CD8-positive, alpha-beta T cell (primary cell): ENCODE measurements at regions of chr9 and their contacts with region 1.

Region 1: GRCh38 chr9:12091865-12092527 is 601.2 kb upstream of the TYRP1 start:
- DNase-seq: no peak
- ATAC-seq: no peak
- H3K4me3 ChIP-seq: no peak overlapping the region
- H3K4me3 Mint-ChIP-seq: no peak overlapping the region
- H3K27ac ChIP-seq: no peak overlapping the region
- H3K27ac Mint-ChIP-seq: no peak overlapping the region
- H3K4me1 ChIP-seq: no peaks in the 10 kb centered on the region
- H3K4me1 Mint-ChIP-seq: no peaks in the 10 kb centered on the region
- H3K27me3 ChIP-seq: no peaks in the 10 kb centered on the region
- H3K27me3 Mint-ChIP-seq: no peaks in the 10 kb centered on the region
- CTCF ChIP-seq: no peak

Region 2: DNA sequence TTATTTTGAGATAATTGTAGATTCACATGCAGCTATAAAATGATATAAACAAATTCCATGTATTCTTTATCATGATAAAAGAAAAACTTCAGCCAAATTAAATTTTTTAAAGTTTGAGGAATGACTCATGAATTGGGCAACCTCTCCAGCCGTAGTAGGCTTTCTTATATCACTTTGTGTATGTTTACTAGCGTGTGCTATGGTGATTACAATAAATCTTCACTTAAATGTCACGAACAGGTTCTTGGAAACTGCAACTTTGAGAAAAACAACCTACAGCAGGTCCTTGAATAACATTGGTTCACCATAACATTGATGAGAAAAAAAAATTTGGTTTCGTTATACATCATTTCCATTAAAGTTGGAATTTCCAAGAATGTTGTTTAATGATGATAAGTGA is 129.7 kb before region 1 on chr9:
- CTCF ChIA-PET with region 1: no interaction called
- POLR2A ChIA-PET with region 1: no interaction called
- intact Hi-C with region 1: no loop called
- DNase-seq: no peak
- ATAC-seq: no peak
- H3K4me3 ChIP-seq: no peak overlapping the region
- H3K4me3 Mint-ChIP-seq: no peak overlapping the region
- H3K27ac ChIP-seq: no peak overlapping the region
- H3K27ac Mint-ChIP-seq: no peak overlapping the region
- H3K4me1 ChIP-seq: no peaks in the 10 kb centered on the region
- H3K4me1 Mint-ChIP-seq: no peaks in the 10 kb centered on the region
- H3K27me3 ChIP-seq: no peaks in the 10 kb centered on the region
- H3K27me3 Mint-ChIP-seq: no peaks in the 10 kb centered on the region
- CTCF ChIP-seq: no peak

Region 3: GRCh38 chr9:12133416-12133815 is 41.4 kb after region 1 on chr9:
- CTCF ChIA-PET with region 1: no interaction called
- POLR2A ChIA-PET with region 1: no interaction called
- intact Hi-C with region 1: loop called in 1 of 2 experiments (anchors 2 kb)
- DNase-seq: no peak
- ATAC-seq: no peak
- H3K4me3 ChIP-seq: no peak overlapping the region
- H3K4me3 Mint-ChIP-seq: no peak overlapping the region
- H3K27ac ChIP-seq: no peak overlapping the region
- H3K27ac Mint-ChIP-seq: no peak overlapping the region
- H3K4me1 ChIP-seq: no peaks in the 10 kb centered on the region
- H3K4me1 Mint-ChIP-seq: no peaks in the 10 kb centered on the region
- H3K27me3 ChIP-seq: no peaks in the 10 kb centered on the region
- H3K27me3 Mint-ChIP-seq: no peaks in the 10 kb centered on the region
- CTCF ChIP-seq: no peak

Region 4: DNA sequence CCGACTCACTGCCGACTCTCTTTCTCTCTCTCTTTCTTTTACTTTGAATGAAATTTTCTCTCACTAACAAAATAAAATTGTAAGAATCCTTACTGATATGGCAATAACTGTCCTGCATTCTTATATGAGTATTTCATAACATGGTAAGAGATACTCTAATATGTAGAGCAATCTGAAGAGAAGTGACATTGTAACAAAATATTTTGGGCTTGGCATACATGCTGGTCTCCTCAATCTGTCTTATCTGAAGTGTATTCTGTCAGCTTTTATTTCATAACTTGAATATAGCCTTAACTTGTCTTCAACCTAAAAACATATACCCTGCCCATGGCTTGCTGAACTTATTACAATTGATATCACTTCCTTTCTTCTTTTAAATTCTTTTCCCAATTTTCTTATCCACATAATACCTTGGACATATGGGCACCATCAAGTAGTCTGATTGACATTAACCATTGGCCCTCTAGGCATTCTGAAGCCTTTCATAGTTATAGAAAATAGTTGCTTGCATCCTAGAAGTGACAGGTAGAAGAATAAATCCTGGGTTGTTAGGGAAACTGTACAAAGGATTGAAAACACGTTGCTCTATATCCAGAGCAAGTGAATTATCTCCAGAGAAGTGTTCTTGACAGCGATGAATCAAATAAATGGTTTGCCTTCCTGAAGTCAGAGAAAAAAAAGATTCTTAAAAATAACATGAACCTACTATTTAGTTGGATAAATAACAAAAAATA is 63.6 kb after region 1 on chr9:
- CTCF ChIA-PET with region 1: no interaction called
- POLR2A ChIA-PET with region 1: no interaction called
- intact Hi-C with region 1: loop called in 1 of 2 experiments (anchors 10 kb)
- DNase-seq: no peak
- ATAC-seq: no peak
- H3K4me3 ChIP-seq: no peak overlapping the region
- H3K4me3 Mint-ChIP-seq: no peak overlapping the region
- H3K27ac ChIP-seq: no peak overlapping the region
- H3K27ac Mint-ChIP-seq: no peak overlapping the region
- H3K4me1 ChIP-seq: no peaks in the 10 kb centered on the region
- H3K4me1 Mint-ChIP-seq: no peaks in the 10 kb centered on the region
- H3K27me3 ChIP-seq: no peaks in the 10 kb centered on the region
- H3K27me3 Mint-ChIP-seq: no peaks in the 10 kb centered on the region
- CTCF ChIP-seq: no peak